HEK293 (cell line): ENCODE measurements at regions of chr19 and their contacts with region 1.

Region 1: GRCh38 chr19:55632463-55632834 is 8.1 kb upstream of the ZNF784 start:
- H3K4me3 ChIP-seq: no peak overlapping the region
- H3K27ac ChIP-seq: no peak overlapping the region
- H3K4me1 ChIP-seq: peaks cover 12% of the 10 kb centered on the region
- CTCF ChIP-seq: peak; percentile 79

Region 2: DNA sequence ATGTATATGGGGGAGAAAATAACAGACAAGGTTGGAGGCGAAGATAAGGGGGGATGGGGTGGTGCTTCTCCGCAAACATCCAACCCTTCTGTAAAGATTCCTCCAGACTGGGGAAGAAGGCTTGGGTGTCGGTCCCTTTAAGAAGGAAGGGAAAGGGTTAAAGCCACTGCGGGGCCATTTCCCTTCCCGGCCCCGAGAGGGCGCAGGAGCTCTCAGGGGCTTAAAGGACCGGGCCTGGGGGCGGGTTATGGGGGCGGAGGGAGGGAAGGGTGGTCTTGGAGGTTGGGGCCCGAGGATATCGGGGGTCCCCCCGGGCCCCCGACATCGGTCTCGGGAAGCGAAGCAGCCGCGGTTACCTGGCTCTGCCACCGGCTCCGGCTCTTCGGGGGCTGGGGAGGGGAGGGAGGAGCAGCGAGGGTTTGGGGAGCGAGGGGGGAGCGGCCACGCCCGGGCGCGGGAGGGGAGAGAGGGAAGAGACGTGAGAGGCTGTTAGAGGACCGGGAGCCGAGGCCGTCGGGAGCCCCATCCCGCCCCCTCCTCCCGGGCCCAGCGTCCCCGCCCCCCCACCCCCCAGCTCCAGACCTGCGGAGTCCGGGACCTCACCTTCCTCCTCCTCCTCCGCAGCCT is 486.3 kb before region 1 on chr19:
- CTCF ChIA-PET with region 1: interaction called, 18 read pairs
- POLR2A ChIA-PET with region 1: interaction called, 4 read pairs
- H3K4me3 ChIP-seq: peak overlapping the region; percentile 46
- H3K27ac ChIP-seq: no peak overlapping the region
- H3K4me1 ChIP-seq: no peaks in the 10 kb centered on the region
- CTCF ChIP-seq: peak; percentile 61; the same call in 1 of the 2 replicates

Region 3: GRCh38 chr19:55216461-55217198 is 415.8 kb before region 1 on chr19:
- CTCF ChIA-PET with region 1: no interaction called
- POLR2A ChIA-PET with region 1: no interaction called
- H3K4me3 ChIP-seq: peak overlapping the region; percentile 72
- H3K27ac ChIP-seq: peak overlapping the region; percentile 67
- H3K4me1 ChIP-seq: peaks cover 10% of the 10 kb centered on the region
- CTCF ChIP-seq: no peak

Region 4: GRCh38 chr19:55516878-55517620 is 115.4 kb before region 1 on chr19:
- CTCF ChIA-PET with region 1: interaction called, 24 read pairs
- POLR2A ChIA-PET with region 1: interaction called, 5 read pairs
- H3K4me3 ChIP-seq: peak overlapping the region; percentile 37
- H3K27ac ChIP-seq: no peak overlapping the region
- H3K4me1 ChIP-seq: no peaks in the 10 kb centered on the region
- CTCF ChIP-seq: peak; percentile 97

Region 5: GRCh38 chr19:55643348-55644176 is 11.1 kb after region 1 on chr19 and contains the start of gene ZNF581:
- CTCF ChIA-PET with region 1: interaction called, 37 read pairs
- POLR2A ChIA-PET with region 1: interaction called, 10 read pairs
- H3K4me3 ChIP-seq: peak within 1 kb of the TSS; percentile 61
- H3K27ac ChIP-seq: peak within 1 kb of the TSS; percentile 83
- H3K4me1 ChIP-seq: peaks cover 27% of the 10 kb centered on the region
- CTCF ChIP-seq: no peak

Region 6: GRCh38 chr19:55674841-55675660 is 42.6 kb after region 1 on chr19 and contains the start of gene EPN1:
- CTCF ChIA-PET with region 1: interaction called, 35 read pairs
- POLR2A ChIA-PET with region 1: interaction called, 5 read pairs
- H3K4me3 ChIP-seq: peak within 1 kb of the TSS; percentile 99
- H3K27ac ChIP-seq: peak within 1 kb of the TSS; percentile 82
- H3K4me1 ChIP-seq: peaks cover 19% of the 10 kb centered on the region
- CTCF ChIP-seq: no peak

Region 7: GRCh38 chr19:55704494-55705245 is 72.2 kb after region 1 on chr19:
- CTCF ChIA-PET with region 1: no interaction called
- POLR2A ChIA-PET with region 1: no interaction called
- H3K4me3 ChIP-seq: no peak overlapping the region
- H3K27ac ChIP-seq: no peak overlapping the region
- H3K4me1 ChIP-seq: no peaks in the 10 kb centered on the region
- CTCF ChIP-seq: no peak

Region 8: GRCh38 chr19:56083668-56084067 is 451.2 kb after region 1 on chr19:
- CTCF ChIA-PET with region 1: no interaction called
- POLR2A ChIA-PET with region 1: no interaction called
- H3K4me3 ChIP-seq: no peak overlapping the region
- H3K27ac ChIP-seq: no peak overlapping the region
- H3K4me1 ChIP-seq: peaks cover 3% of the 10 kb centered on the region; the same call in 1 of the 2 replicates
- CTCF ChIP-seq: no peak

Region 9: GRCh38 chr19:56333505-56333904 is 701.1 kb after region 1 on chr19:
- CTCF ChIA-PET with region 1: interaction called, 14 read pairs
- POLR2A ChIA-PET with region 1: interaction called, 4 read pairs
- H3K4me3 ChIP-seq: no peak overlapping the region
- H3K27ac ChIP-seq: no peak overlapping the region
- H3K4me1 ChIP-seq: no peaks in the 10 kb centered on the region
- CTCF ChIP-seq: no peak